ENCODE measurements at regions of chr1 and their contacts with region 1.

Region 1: DNA sequence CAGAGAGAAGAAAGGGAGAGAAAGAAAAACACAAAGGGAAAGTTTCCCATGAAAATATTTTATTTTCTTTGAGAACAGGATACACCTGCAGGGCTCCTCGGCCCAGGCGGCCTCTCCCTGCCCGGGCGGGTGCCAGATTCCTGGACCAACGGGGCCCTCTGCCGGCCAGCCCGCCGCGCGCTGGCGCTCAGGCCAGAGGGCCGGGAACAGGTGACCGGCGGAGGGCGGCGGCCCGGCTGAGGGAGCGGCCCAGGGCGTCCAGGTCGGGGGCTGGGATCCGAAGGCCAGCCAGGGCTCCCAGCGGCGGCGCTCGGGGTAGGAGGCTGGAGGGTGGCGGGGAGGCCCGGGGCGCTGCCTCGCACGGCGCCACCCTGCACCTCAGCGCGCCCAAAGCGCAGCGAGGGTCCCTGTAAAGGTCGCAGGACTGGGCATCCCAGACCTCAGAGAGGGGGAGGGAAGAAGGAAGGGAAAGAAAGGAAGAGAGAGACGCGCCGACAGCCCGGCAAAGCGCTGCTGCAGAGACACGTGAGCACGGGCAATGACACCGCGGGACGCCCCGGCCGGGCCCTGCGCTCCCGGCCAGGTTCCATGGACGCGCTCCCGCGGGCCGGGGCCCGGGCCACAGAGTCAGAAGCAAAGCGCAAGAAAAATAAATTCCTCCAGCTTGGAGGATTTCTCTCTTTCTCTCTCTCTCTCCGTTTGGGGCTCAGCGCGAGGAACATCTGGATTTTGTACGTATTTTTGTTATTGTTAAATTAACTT is 927 bp downstream of the WNT9A start:
- DNase-seq: peak in 1 of 2 experiments; percentile 92
- H3K4me3 ChIP-seq: peak overlapping the region; percentile 48 to 72 (median 65)
- H3K27ac ChIP-seq: no peak overlapping the region
- H3K4me1 ChIP-seq: peaks cover 0 to 19% (median 10%) of the 10 kb centered on the region in 4 experiments; a peak in 5 of 7 replicates
- H3K27me3 ChIP-seq: peaks cover 9 to 22% (median 18%) of the 10 kb centered on the region in 4 experiments
- CTCF ChIP-seq: peak; percentile 66 to 94 (median 80)
- EP300 ChIP-seq: peak in 1 of 2 experiments; percentile 94; a peak in 1 of 3 replicates
- POLR2A ChIP-seq: no peak
- RAD21 ChIP-seq: peak; percentile 90 to 97

Region 2: GRCh38 chr1:227787513-227788270 is 159.1 kb before region 1 on chr1:
- CTCF ChIA-PET with region 1: interaction called, 11 read pairs
- POLR2A ChIA-PET with region 1: interaction called, 3 read pairs
- DNase-seq: peak; percentile 86 to 91
- H3K4me3 ChIP-seq: peak overlapping the region; percentile 52 to 69 (median 60)
- H3K27ac ChIP-seq: no peak overlapping the region
- H3K4me1 ChIP-seq: peaks cover 0 to 15% (median 9%) of the 10 kb centered on the region in 4 experiments; a peak in 5 of 7 replicates
- H3K27me3 ChIP-seq: peaks cover 4 to 37% (median 27%) of the 10 kb centered on the region in 4 experiments; a peak in 6 of 7 replicates
- CTCF ChIP-seq: no peak
- EP300 ChIP-seq: no peak
- POLR2A ChIP-seq: no peak
- RAD21 ChIP-seq: no peak

Region 3: DNA sequence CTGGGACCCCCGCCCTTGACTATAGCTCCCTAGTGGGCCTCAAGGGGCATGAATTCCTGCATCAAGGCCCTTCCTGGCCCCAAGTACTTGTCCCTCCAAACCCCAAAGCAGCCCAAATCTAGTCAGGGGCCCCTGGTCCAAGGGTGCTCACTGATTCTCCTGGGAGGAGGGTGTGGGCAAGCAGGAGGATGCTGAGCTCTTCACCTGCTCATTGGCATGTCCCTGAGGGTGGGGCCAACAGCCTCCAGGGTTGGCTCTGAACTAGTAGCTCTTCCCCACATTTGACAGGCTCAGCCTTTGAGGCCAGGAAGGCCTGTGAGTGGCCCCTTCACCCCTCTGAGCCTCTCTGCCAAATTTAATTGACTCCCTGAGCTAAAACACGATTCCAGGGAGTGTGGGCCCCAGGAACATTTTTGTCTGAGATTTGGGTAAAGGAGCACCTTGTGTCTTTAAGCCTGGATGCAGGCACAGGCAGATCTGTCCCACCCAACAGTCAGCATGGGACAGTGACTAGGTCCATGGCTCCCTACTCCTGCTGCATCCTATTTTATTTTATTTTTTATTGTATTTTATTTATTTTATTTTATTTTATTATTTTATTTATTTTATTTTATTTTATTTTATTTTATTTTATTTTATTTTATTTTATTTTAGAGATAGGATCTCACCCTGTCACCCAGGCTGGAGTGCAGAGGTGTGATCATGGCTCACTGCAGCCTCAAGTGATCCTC is 12.0 kb after region 1 on chr1:
- CTCF ChIA-PET with region 1: interaction called, 16 read pairs
- POLR2A ChIA-PET with region 1: no interaction called
- DNase-seq: no peak
- H3K4me3 ChIP-seq: no peak overlapping the region
- H3K27ac ChIP-seq: no peak overlapping the region
- H3K4me1 ChIP-seq: peaks cover 0 to 3% (median under 1%) of the 10 kb centered on the region in 4 experiments; a peak in 1 of 7 replicates
- H3K27me3 ChIP-seq: no peaks in the 10 kb centered on the region
- CTCF ChIP-seq: no peak
- EP300 ChIP-seq: no peak
- POLR2A ChIP-seq: no peak
- RAD21 ChIP-seq: no peak